Activated T-helper 1 cell treated with anti-CD3 and anti-CD28 coated beads, Interleukin-12 subunit alpha, Interleukin-12 subunit beta, Interleukin-2, Interleukin-4 antibody, amounts not matched to agents 30 ng/mL and 10 ng/mL and 1 ng/mL, durations not matched to agents 14 hours and 24 hours and 36 hours (primary cell): ENCODE measurements at regions of chr1 and their contacts with region 1.

Region 1: GRCh38 chr1:89524369-89525168 is at the start of gene LRRC8B:
- DNase-seq: peak; percentile 89
- H3K4me3 Mint-ChIP-seq: no peak within 1 kb of the TSS
- H3K27ac Mint-ChIP-seq: no peak within 1 kb of the TSS
- H3K4me1 Mint-ChIP-seq: peaks cover 36% of the 10 kb centered on the region
- H3K27me3 Mint-ChIP-seq: no peaks in the 10 kb centered on the region
- total RNA-seq, gene LRRC8B: 62.3 and 69.9 TPM in 2 replicates

Region 2: DNA sequence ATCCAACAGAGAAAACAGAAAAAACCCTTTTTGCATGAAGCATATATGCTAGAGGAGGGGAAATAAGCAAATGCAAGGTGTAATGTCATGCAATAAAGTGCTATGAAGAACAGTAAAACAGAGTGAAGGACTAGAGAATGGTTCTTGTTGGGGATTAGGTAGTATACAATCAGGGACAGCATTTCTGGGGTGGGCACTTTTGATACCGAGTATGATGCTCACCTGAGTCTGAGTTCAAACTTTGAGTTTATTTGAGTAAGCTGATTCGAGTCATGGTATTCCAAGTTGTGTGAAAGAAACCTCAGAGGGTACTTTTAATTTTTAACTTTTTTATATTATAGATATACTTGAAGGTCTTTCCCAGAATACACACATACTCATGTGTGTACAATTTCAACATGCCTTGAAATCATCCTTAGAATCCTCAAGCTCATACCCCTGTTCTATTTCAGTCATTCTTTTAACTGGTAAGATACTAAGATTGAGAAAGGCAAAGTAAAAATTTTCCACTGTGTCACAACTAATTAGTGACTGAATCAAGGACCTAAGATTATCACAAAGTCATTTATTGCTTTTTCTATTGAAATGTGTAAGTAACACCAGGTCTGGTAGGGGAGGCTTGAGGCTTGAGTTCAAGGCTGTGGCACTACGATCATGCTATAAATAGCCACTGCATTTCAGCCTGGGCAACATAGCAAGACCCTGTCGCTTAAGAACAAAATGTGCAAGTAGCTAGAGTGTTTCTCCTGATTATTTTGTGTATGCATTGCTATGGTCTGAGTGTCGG is 12.2 kb after region 1 on chr1:
- intact Hi-C with region 1: loop called (anchors 1 kb)
- DNase-seq: no peak
- H3K4me3 Mint-ChIP-seq: peak overlapping the region; percentile 50
- H3K27ac Mint-ChIP-seq: peak overlapping the region; percentile 89
- H3K4me1 Mint-ChIP-seq: peaks cover 78% of the 10 kb centered on the region
- H3K27me3 Mint-ChIP-seq: no peaks in the 10 kb centered on the region

Region 3: GRCh38 chr1:89552471-89553081 is 28.0 kb after region 1 on chr1:
- intact Hi-C with region 1: loop called (anchors 5 kb)
- DNase-seq: no peak
- H3K4me3 Mint-ChIP-seq: peak overlapping the region; percentile 50
- H3K27ac Mint-ChIP-seq: peak overlapping the region; percentile 75
- H3K4me1 Mint-ChIP-seq: peaks cover 92% of the 10 kb centered on the region
- H3K27me3 Mint-ChIP-seq: no peaks in the 10 kb centered on the region

Region 4: GRCh38 chr1:89603651-89604413 is 79.3 kb after region 1 on chr1:
- intact Hi-C with region 1: loop called (anchors 1 kb)
- DNase-seq: no peak
- H3K4me3 Mint-ChIP-seq: peak overlapping the region; percentile 56
- H3K27ac Mint-ChIP-seq: peak overlapping the region; percentile 99
- H3K4me1 Mint-ChIP-seq: peaks cover 97% of the 10 kb centered on the region
- H3K27me3 Mint-ChIP-seq: no peaks in the 10 kb centered on the region

Region 5: GRCh38 chr1:89762779-89763648 is 238.4 kb after region 1 on chr1:
- intact Hi-C with region 1: loop called (anchors 1 kb)
- DNase-seq: peak; percentile 78
- H3K4me3 Mint-ChIP-seq: peak overlapping the region; percentile 92
- H3K27ac Mint-ChIP-seq: peak overlapping the region; percentile 93
- H3K4me1 Mint-ChIP-seq: peaks cover 63% of the 10 kb centered on the region
- H3K27me3 Mint-ChIP-seq: no peaks in the 10 kb centered on the region